Heart left ventricle (tissue), 16 donors: ENCODE measurements at regions of chr22 and their contacts with region 1.

Region 1: GRCh38 chr22:42856865-42857704 is at the start of gene ARFGAP3:
- DNase-seq: peak; percentile 94 to 98 (median 96)
- ATAC-seq: peak; percentile 90 to 98 (median 96)
- H3K4me3 ChIP-seq: peak within 1 kb of the TSS; percentile 72 to 95 (median 90)
- H3K27ac ChIP-seq: peak within 1 kb of the TSS; percentile 87 to 98 (median 98)
- H3K4me1 ChIP-seq: peaks cover 0 to 35% (median 18%) of the 10 kb centered on the region in 12 donors
- H3K27me3 ChIP-seq: no peaks in the 10 kb centered on the region
- CTCF ChIP-seq: no peak
- POLR2A ChIP-seq: peak; percentile 27 to 92
- total RNA-seq, gene ARFGAP3: 15.4 to 30.9 (median 25.1) TPM

Region 2: GRCh38 chr22:42780070-42780540 is 77.0 kb before region 1 on chr22:
- intact Hi-C with region 1: loop called in 1 of 10 experiments (anchors 10 kb)
- DNase-seq: peak in 2 of 5 donors; percentile 61 to 77
- ATAC-seq: peak; percentile 54 to 88 (median 88)
- H3K4me3 ChIP-seq: no peak overlapping the region
- H3K27ac ChIP-seq: peak overlapping the region in 2 of 12 donors; percentile 46 to 52
- H3K4me1 ChIP-seq: peaks cover 0 to 9% (median 3%) of the 10 kb centered on the region in 12 donors
- H3K27me3 ChIP-seq: no peaks in the 10 kb centered on the region
- CTCF ChIP-seq: peak; percentile 80 to 93 (median 87)
- POLR2A ChIP-seq: no peak